Kidney (tissue), 22 donors: ENCODE measurements at regions of chr18 and their contacts with region 1.

Region 1: DNA sequence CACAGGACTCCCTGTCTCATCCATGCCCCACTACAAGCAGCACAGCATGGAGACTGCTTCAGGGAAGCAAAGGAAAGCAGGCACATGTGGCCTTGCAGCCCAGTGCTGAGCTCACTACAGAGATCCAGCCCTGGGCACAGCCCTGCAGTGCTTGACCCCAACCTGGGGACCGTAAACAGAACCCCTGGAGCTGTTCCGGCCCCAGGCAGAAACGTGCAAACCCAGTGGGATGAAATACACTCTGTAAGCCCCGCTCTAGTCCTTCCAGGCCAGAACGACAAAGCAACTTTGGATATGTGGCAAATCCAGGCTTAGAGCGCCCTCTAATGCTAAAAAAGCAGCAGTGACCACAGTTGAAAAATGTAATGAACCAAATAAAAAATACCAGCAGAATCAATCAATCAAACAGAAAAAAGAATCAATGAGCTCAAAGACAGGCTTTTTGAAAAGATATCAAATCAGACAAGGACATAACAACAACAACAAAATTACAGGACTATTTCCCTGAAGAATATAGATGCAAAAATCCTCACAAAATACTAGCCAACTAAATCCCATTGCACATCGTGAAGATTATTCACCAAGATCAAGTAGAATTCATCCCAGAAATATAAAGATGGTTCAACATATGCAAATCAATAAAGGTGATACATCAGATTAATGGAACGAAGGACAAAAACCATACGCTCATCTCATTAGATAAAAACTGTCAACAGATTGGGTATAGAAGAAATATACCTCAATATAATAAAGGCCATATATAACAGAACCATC is 45.6 kb downstream of the ZNF519 start:
- DNase-seq: peak in 4 of 5 donors; percentile 45 to 80 (median 66)
- H3K4me3 ChIP-seq: no peak overlapping the region
- H3K27ac ChIP-seq: no peak overlapping the region
- H3K4me1 ChIP-seq: no peaks in the 10 kb centered on the region
- H3K27me3 ChIP-seq: no peaks in the 10 kb centered on the region
- CTCF ChIP-seq: peak; percentile 59

Region 2: GRCh38 chr18:12645254-12646203 is 1441.1 kb before region 1 on chr18:
- intact Hi-C with region 1: no loop called
- DNase-seq: peak in 4 of 5 donors; percentile 43 to 70 (median 50)
- H3K4me3 ChIP-seq: no peak overlapping the region
- H3K27ac ChIP-seq: peak overlapping the region; percentile 69 to 78
- H3K4me1 ChIP-seq: peaks cover 0 to 9% (median 0%) of the 10 kb centered on the region in 3 donors
- H3K27me3 ChIP-seq: no peaks in the 10 kb centered on the region
- CTCF ChIP-seq: no peak

Region 3: GRCh38 chr18:13823707-13824395 is 262.8 kb before region 1 on chr18 and contains the start of gene MC5R:
- intact Hi-C with region 1: loop called (anchors 5 kb)
- DNase-seq: peak; percentile 64 to 83 (median 70)
- H3K4me3 ChIP-seq: peak within 1 kb of the TSS in 2 of 3 donors; percentile 19 to 57
- H3K27ac ChIP-seq: no peak within 1 kb of the TSS
- H3K4me1 ChIP-seq: no peaks in the 10 kb centered on the region
- H3K27me3 ChIP-seq: peaks cover 3% of the 10 kb centered on the region
- CTCF ChIP-seq: peak; percentile 98
- total RNA-seq, gene MC5R: not detected

Region 4: GRCh38 chr18:14026199-14026598 is 60.4 kb before region 1 on chr18:
- intact Hi-C with region 1: loop called (anchors 10 kb)
- DNase-seq: no peak
- H3K4me3 ChIP-seq: no peak overlapping the region
- H3K27ac ChIP-seq: no peak overlapping the region
- H3K4me1 ChIP-seq: no peaks in the 10 kb centered on the region
- H3K27me3 ChIP-seq: no peaks in the 10 kb centered on the region
- CTCF ChIP-seq: no peak